Activated CD4-positive, alpha-beta T cell treated with anti-CD3 and anti-CD28 coated beads for 36 hours (primary cell): ENCODE measurements at regions of chr4 and their contacts with region 1.

Region 1: DNA sequence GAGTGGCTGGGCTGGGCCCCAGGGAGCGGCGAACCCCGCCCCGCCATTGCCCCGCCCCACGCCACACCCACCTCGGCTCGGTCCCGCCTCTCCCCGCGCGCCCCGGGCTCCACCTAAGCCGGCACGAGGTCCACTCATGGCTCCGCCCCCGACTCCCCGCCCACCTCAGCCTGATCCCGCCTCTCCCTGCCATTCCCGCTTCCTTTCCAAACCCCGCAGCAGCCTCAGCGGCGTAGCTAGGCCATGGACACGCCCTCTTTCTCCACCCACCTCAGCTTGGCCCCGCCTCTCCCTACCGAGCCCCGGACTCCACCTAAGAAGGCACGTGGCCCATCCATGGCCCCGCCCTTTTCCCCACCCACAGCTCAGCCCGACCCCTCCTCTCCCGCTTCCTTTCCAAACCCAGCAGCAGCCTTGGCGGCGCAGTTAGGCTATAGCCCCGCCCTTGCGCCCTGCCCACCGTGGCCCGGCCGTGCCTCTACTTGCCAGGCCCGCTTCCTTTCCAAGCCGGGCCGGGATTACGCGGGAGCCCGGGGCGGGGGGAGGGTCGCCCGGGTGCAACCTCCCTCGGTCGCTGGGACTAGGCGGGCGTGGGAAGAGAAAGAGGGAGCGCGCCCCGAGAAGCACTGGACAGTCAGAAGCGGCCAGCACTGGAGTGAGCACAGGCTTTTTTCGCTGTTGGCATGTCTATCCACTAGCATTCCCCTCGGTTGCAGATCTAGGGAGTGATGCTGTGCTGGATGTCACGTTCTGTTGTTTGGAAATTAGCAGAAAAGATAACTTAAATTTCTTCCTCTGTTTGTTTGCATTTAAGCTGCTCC is at the start of gene RELL1:
- DNase-seq: peak; percentile 99
- ATAC-seq: peak; percentile 89
- H3K4me3 Mint-ChIP-seq: peak within 1 kb of the TSS; percentile 84
- H3K27ac Mint-ChIP-seq: peak within 1 kb of the TSS; percentile 94
- H3K4me1 Mint-ChIP-seq: peaks cover 35% of the 10 kb centered on the region
- H3K27me3 Mint-ChIP-seq: no peaks in the 10 kb centered on the region
- total RNA-seq, gene RELL1: 8.5 to 9.5 TPM

Region 2: GRCh38 chr4:37452952-37453280 is 233.7 kb before region 1 on chr4:
- CTCF ChIA-PET with region 1: no interaction called
- POLR2A ChIA-PET with region 1: no interaction called
- intact Hi-C with region 1: loop called in 1 of 2 experiments (anchors 1 kb)
- DNase-seq: peak; percentile 68
- ATAC-seq: peak; percentile 70
- H3K4me3 Mint-ChIP-seq: peak overlapping the region; percentile 53
- H3K27ac Mint-ChIP-seq: no peak overlapping the region
- H3K4me1 Mint-ChIP-seq: peaks cover 15% of the 10 kb centered on the region
- H3K27me3 Mint-ChIP-seq: peaks cover 53% of the 10 kb centered on the region

Region 3: DNA sequence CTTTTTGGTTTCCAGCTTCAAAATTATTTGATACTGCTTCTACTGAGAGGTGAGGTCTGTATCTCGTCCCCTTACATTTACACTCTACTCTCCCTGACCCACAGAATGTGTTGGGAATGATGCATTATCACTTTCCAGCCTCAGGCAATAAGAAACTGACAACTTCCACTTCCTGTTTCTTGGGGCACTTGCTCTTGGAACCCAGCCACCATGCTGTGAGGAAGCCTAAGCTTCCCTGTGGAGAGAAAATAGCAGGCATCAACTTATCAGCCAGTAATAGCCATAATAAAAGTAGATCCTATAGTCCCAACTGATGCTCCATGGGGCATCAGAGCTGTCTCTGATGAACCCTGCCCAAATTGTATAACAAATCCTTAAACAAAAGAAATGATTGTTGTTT is 33.0 kb before region 1 on chr4:
- CTCF ChIA-PET with region 1: no interaction called
- POLR2A ChIA-PET with region 1: no interaction called
- intact Hi-C with region 1: no loop called
- DNase-seq: no peak
- ATAC-seq: no peak
- H3K4me3 Mint-ChIP-seq: no peak overlapping the region
- H3K27ac Mint-ChIP-seq: no peak overlapping the region
- H3K4me1 Mint-ChIP-seq: peaks cover 16% of the 10 kb centered on the region
- H3K27me3 Mint-ChIP-seq: no peaks in the 10 kb centered on the region

Region 4: DNA sequence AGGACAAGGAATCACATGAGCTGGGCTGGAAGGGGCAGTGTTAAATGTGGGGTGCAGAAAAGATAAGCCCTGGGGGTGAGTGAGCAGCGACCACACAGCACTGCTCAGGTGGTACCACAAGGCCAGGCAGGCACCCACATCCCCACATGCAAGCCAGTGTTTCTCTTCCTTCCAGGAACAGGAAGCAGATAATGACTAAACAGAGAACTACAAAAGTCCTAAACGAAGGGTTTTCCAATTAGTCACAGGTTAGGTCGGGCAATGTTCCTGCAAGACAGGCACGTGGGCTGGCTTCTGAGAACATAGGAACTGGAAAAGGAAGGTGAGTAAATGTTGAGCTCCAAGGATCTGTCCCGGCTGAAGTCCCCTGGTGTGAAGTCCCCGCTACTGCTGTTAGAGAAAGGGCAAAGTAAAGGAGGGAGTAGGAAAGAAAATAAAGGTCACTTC is 19.9 kb before region 1 on chr4:
- CTCF ChIA-PET with region 1: no interaction called
- POLR2A ChIA-PET with region 1: interaction called, 3 read pairs
- intact Hi-C with region 1: loop called in 1 of 2 experiments (anchors 2 kb)
- DNase-seq: peak; percentile 38
- ATAC-seq: peak; percentile 73
- H3K4me3 Mint-ChIP-seq: no peak overlapping the region
- H3K27ac Mint-ChIP-seq: no peak overlapping the region
- H3K4me1 Mint-ChIP-seq: peaks cover 52% of the 10 kb centered on the region
- H3K27me3 Mint-ChIP-seq: no peaks in the 10 kb centered on the region

Region 5: GRCh38 chr4:37826295-37827029 is 139.9 kb after region 1 on chr4 and contains the start of gene PGM2:
- CTCF ChIA-PET with region 1: no interaction called
- POLR2A ChIA-PET with region 1: no interaction called
- intact Hi-C with region 1: loop called (anchors 1 kb)
- DNase-seq: peak; percentile 95
- ATAC-seq: peak; percentile 96
- H3K4me3 Mint-ChIP-seq: peak within 1 kb of the TSS; percentile 97
- H3K27ac Mint-ChIP-seq: peak within 1 kb of the TSS; percentile 93
- H3K4me1 Mint-ChIP-seq: peaks cover 29% of the 10 kb centered on the region
- H3K27me3 Mint-ChIP-seq: no peaks in the 10 kb centered on the region
- total RNA-seq, gene PGM2: 54.1 to 60.1 TPM

Region 6: DNA sequence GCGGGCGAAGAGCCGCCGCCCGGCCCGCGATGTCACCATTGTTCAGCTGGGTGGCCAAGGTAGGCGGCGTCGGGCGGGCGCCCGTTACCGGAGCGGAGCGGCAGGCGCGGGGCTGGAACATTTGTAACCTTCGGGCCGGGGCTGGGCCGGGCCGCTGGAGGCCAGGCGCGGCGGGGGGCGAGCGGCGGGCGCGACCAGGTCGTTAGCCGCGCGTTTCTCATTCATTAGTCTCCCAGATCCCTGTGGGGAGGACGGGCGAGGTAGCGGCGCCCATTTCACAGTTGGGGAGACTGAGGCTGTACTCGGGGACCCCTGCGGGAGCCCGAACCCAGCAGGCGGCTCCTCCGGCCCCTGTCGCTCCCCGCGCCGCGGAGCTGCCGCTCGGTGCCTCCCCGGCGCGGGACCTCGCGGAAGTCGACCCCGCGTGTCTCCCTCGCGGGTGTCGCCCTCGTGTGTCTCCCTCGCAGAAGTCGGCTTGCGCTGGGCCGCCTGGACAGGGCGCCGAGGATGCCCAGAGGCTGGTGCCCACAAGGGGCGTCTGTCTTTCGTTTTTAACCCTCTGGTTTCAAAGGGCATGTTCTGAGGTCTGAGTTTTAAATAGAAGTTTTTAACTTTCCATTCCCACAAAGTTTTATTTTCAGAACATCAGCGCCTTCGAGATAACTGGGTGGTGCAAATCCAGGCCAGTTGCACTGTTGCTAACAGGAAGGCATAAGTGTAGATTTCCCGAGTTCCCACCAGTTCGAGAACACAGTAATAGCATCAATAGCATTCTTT is 291.1 kb after region 1 on chr4:
- CTCF ChIA-PET with region 1: no interaction called
- POLR2A ChIA-PET with region 1: no interaction called
- intact Hi-C with region 1: loop called in 1 of 2 experiments (anchors 1 kb)
- DNase-seq: peak; percentile 84
- ATAC-seq: peak; percentile 79
- H3K4me3 Mint-ChIP-seq: peak overlapping the region; percentile 80
- H3K27ac Mint-ChIP-seq: peak overlapping the region; percentile 75
- H3K4me1 Mint-ChIP-seq: peaks cover 42% of the 10 kb centered on the region
- H3K27me3 Mint-ChIP-seq: no peaks in the 10 kb centered on the region

Region 7: DNA sequence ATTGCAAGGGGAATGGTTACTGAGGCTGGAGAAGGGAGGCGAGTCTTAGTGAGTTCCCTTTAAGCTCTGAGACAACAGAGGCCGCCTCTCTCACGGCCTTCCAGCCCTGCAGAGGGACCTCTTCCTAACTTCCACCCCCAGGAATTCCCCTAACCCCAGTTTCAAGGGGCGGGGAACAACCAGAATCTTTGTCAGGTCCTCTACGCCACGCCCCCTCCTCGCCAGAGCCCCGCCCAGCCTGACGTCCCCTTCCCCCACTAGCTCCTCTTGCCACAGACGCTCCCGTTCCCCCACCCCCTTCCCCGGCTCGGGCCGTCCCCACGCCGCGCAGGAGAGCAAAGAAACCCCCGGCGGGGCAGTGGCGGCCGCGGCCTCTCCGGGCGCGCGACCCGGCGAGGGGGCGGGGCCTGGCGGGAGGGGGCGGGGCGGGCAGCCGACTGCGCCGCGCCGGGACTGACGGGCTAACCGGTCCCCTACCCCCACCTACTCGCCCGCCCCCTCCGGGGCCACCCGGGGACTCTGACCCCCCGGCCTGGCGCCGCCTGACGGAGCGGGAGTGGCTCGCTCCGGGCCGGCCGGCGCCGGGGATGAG is 1357.9 kb after region 1 on chr4:
- CTCF ChIA-PET with region 1: no interaction called
- POLR2A ChIA-PET with region 1: no interaction called
- intact Hi-C with region 1: loop called in 1 of 2 experiments (anchors 10 kb)
- DNase-seq: peak; percentile 99
- ATAC-seq: peak; percentile 87
- H3K4me3 Mint-ChIP-seq: peak overlapping the region; percentile 76
- H3K27ac Mint-ChIP-seq: peak overlapping the region; percentile 69
- H3K4me1 Mint-ChIP-seq: peaks cover 48% of the 10 kb centered on the region
- H3K27me3 Mint-ChIP-seq: no peaks in the 10 kb centered on the region